SK-N-SH (cell line): ENCODE measurements at regions of chr11 and their contacts with region 1.

Region 1: GRCh38 chr11:12888525-12889158 is 120.5 kb upstream of the RASSF10 start:
- DNase-seq: peak; percentile 76
- H3K4me3 ChIP-seq: no peak overlapping the region
- H3K27ac ChIP-seq: peak overlapping the region; percentile 23 to 58; a peak in 2 of 4 replicates
- H3K4me1 ChIP-seq: peaks cover 16 to 41% of the 10 kb centered on the region in 2 experiments
- H3K27me3 ChIP-seq: no peaks in the 10 kb centered on the region
- CTCF ChIP-seq: peak; percentile 88
- EP300 ChIP-seq: no peak
- RAD21 ChIP-seq: peak; percentile 90

Region 2: GRCh38 chr11:12411806-12412727 is 476.6 kb before region 1 on chr11:
- CTCF ChIA-PET with region 1: interaction called, 41 read pairs
- POLR2A ChIA-PET with region 1: no interaction called
- DNase-seq: peak; percentile 81
- H3K4me3 ChIP-seq: peak overlapping the region in 1 of 2 experiments; percentile 36; a peak in 2 of 4 replicates
- H3K27ac ChIP-seq: peak overlapping the region; percentile 88 to 99
- H3K4me1 ChIP-seq: peaks cover 35 to 38% of the 10 kb centered on the region in 2 experiments
- H3K27me3 ChIP-seq: no peaks in the 10 kb centered on the region
- CTCF ChIP-seq: peak; percentile 91
- EP300 ChIP-seq: peak in 1 of 2 experiments; percentile 80; a peak in 1 of 4 replicates
- RAD21 ChIP-seq: peak; percentile 93

Region 3: GRCh38 chr11:12680246-12680939 is 208.2 kb before region 1 on chr11:
- CTCF ChIA-PET with region 1: interaction called, 13 read pairs
- POLR2A ChIA-PET with region 1: no interaction called
- DNase-seq: peak; percentile 75
- H3K4me3 ChIP-seq: peak overlapping the region; percentile 25 to 73
- H3K27ac ChIP-seq: peak overlapping the region; percentile 90 to 95
- H3K4me1 ChIP-seq: peaks cover 57 to 60% of the 10 kb centered on the region in 2 experiments
- H3K27me3 ChIP-seq: no peaks in the 10 kb centered on the region
- CTCF ChIP-seq: no peak
- EP300 ChIP-seq: peak; percentile 53 to 81; a peak in 3 of 4 replicates
- RAD21 ChIP-seq: no peak

Region 4: GRCh38 chr11:12813371-12814225 is 75.0 kb before region 1 on chr11:
- CTCF ChIA-PET with region 1: interaction called, 42 read pairs
- POLR2A ChIA-PET with region 1: interaction called, 3 read pairs
- DNase-seq: no peak
- H3K4me3 ChIP-seq: no peak overlapping the region; a peak in 1 of 4 replicates
- H3K27ac ChIP-seq: peak overlapping the region; percentile 86 to 96
- H3K4me1 ChIP-seq: peaks cover 62 to 87% of the 10 kb centered on the region in 2 experiments
- H3K27me3 ChIP-seq: no peaks in the 10 kb centered on the region
- CTCF ChIP-seq: no peak
- EP300 ChIP-seq: no peak
- RAD21 ChIP-seq: no peak

Region 5: GRCh38 chr11:12845739-12846358 is 42.8 kb before region 1 on chr11:
- CTCF ChIA-PET with region 1: interaction called, 16 read pairs
- POLR2A ChIA-PET with region 1: interaction called, 3 read pairs
- DNase-seq: peak; percentile 70
- H3K4me3 ChIP-seq: no peak overlapping the region; a peak in 1 of 4 replicates
- H3K27ac ChIP-seq: peak overlapping the region; percentile 97 to 98; a peak in 3 of 4 replicates
- H3K4me1 ChIP-seq: peaks cover 55 to 66% of the 10 kb centered on the region in 2 experiments
- H3K27me3 ChIP-seq: no peaks in the 10 kb centered on the region
- CTCF ChIP-seq: no peak
- EP300 ChIP-seq: peak in 1 of 2 experiments; percentile 93; a peak in 2 of 4 replicates
- RAD21 ChIP-seq: peak; percentile 38

Region 6: GRCh38 chr11:12900496-12900895 is 11.9 kb after region 1 on chr11:
- CTCF ChIA-PET with region 1: interaction called, 17 read pairs
- POLR2A ChIA-PET with region 1: no interaction called
- DNase-seq: no peak
- H3K4me3 ChIP-seq: no peak overlapping the region
- H3K27ac ChIP-seq: peak overlapping the region; percentile 54 to 65; a peak in 3 of 4 replicates
- H3K4me1 ChIP-seq: peaks cover 8 to 12% of the 10 kb centered on the region in 2 experiments; a peak in 3 of 4 replicates
- H3K27me3 ChIP-seq: no peaks in the 10 kb centered on the region
- CTCF ChIP-seq: no peak
- EP300 ChIP-seq: peak in 1 of 2 experiments; percentile 42; a peak in 1 of 4 replicates
- RAD21 ChIP-seq: no peak